ENCODE measurements at regions of chr2 and their contacts with region 1.

Region 1: GRCh38 chr2:25301453-25302352 is 40.0 kb downstream of the DNMT3A start:
- DNase-seq: peak; percentile 95
- ATAC-seq: peak; percentile 95
- H3K4me3 ChIP-seq: peak overlapping the region; percentile 43
- H3K27ac ChIP-seq: peak overlapping the region; percentile 54
- H3K4me1 ChIP-seq: peaks cover 36% of the 10 kb centered on the region
- H3K27me3 ChIP-seq: no peaks in the 10 kb centered on the region
- CTCF ChIP-seq: no peak
- EP300 ChIP-seq: peak; percentile 89 to 92
- POLR2A ChIP-seq: peak; percentile 46; the same call in 1 of the 2 replicates
- RAD21 ChIP-seq: no peak

Region 2: GRCh38 chr2:24971536-24972314 is 330.0 kb before region 1 on chr2 and contains the start of gene DNAJC27:
- CTCF ChIA-PET with region 1: no interaction called
- POLR2A ChIA-PET with region 1: no interaction called
- RAD21 ChIA-PET with region 1: no interaction called
- SMC1A ChIA-PET with region 1: no interaction called
- in situ Hi-C with region 1: no loop called
- intact Hi-C with region 1: no loop called
- DNase-seq: peak; percentile 93
- ATAC-seq: peak; percentile 97
- H3K4me3 ChIP-seq: peak within 1 kb of the TSS; percentile 78
- H3K27ac ChIP-seq: peak within 1 kb of the TSS; percentile 95
- H3K4me1 ChIP-seq: no peaks in the 10 kb centered on the region
- H3K27me3 ChIP-seq: no peaks in the 10 kb centered on the region
- CTCF ChIP-seq: no peak
- EP300 ChIP-seq: no peak
- POLR2A ChIP-seq: peak; percentile 83
- RAD21 ChIP-seq: no peak
- polyA plus RNA-seq, gene DNAJC27: 0.95 to 1.3 TPM

Region 3: DNA sequence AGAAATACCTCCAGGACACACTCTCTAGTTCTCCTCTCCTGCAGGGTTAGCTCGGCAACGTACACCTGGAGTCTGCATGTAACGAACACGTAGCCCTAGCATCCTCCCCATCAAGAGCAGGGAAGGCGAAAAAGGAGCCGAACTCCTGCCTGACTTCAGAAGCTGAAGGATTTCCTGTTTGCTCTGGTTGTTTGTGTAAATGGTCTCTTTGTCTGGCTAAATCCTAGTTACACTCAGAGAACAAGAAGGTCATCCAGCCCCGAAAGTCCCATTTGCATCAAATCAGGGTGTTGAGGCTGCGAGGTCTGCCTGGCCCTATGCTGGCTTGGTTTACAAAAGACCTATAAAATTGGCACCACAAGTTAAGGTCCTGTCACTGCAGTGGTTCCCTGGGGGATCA is 67.0 kb before region 1 on chr2:
- CTCF ChIA-PET with region 1: no interaction called
- POLR2A ChIA-PET with region 1: no interaction called
- RAD21 ChIA-PET with region 1: no interaction called
- SMC1A ChIA-PET with region 1: no interaction called
- in situ Hi-C with region 1: no loop called
- intact Hi-C with region 1: no loop called
- DNase-seq: no peak
- ATAC-seq: no peak
- H3K4me3 ChIP-seq: no peak overlapping the region
- H3K27ac ChIP-seq: no peak overlapping the region
- H3K4me1 ChIP-seq: no peaks in the 10 kb centered on the region
- H3K27me3 ChIP-seq: no peaks in the 10 kb centered on the region
- CTCF ChIP-seq: no peak
- EP300 ChIP-seq: no peak
- POLR2A ChIP-seq: no peak
- RAD21 ChIP-seq: no peak

Region 4: DNA sequence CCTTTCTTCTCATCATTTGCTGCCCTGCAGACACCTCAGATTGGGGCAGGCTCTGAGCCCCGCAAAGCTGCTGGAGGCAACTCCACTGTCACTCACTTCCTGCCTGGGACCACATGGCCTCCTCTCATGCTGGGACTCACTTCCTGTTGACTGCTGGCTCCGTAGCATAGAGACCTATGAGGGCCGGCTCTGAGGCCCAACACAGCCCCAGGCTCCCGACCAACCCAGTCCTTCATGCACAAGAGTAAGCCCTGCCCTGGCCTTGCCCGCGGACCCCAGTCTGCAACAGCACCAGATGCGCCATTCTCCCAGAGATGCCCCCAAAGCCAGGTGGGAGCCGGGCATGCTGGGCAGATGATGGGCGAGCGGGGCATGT is 15.7 kb before region 1 on chr2:
- CTCF ChIA-PET with region 1: interaction called, 59 read pairs
- POLR2A ChIA-PET with region 1: interaction called, 4 read pairs
- RAD21 ChIA-PET with region 1: interaction called, 41 read pairs
- SMC1A ChIA-PET with region 1: interaction called, 8 read pairs
- in situ Hi-C with region 1: no loop called
- intact Hi-C with region 1: loop called (anchors 2 kb)
- DNase-seq: no peak
- ATAC-seq: peak; percentile 82
- H3K4me3 ChIP-seq: no peak overlapping the region
- H3K27ac ChIP-seq: peak overlapping the region; percentile 72
- H3K4me1 ChIP-seq: peaks cover 30% of the 10 kb centered on the region
- H3K27me3 ChIP-seq: no peaks in the 10 kb centered on the region
- CTCF ChIP-seq: no peak
- EP300 ChIP-seq: no peak
- POLR2A ChIP-seq: peak; percentile 71
- RAD21 ChIP-seq: no peak

Region 5: DNA sequence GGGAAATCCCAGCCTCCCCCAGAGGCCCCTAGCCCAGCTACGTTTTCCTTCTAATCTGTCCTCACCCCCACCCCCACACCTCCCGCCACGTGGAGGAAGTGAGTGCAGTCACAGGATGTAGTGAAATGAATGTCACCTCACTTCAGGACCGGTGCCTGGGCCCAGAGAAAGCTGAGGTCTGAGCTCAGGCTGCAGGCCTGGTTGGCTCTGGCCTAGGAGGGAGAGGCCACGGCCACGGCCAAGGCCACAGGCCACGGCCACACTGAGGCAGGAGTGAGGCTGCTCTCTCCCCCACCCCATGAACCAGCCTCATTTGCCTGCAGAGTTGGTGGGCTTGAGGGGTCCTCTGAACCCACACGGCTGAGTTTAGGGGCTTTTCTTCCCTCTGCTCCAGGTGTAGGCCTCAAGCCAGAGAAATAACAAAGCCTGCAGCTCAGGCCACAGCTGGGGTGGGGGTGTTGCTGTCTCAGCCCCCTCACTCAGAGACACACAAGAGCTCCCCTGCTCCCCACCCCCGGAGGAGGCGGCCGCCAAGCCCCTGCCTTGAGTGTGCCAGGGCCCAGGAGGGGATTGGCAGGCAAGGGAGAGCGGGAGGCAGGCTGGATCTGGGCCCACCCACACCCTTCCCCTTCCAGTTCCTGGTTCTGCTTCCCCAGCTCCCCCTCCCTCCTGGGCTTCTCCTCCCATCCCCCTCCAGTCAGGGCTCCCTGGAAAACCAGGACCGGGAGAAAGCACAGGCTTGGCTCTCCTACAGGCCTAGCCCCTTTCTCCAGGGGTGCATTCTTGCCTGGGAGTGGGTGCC is 13.0 kb after region 1 on chr2:
- CTCF ChIA-PET with region 1: interaction called, 8 read pairs
- POLR2A ChIA-PET with region 1: interaction called, 6 read pairs
- RAD21 ChIA-PET with region 1: interaction called, 12 read pairs
- SMC1A ChIA-PET with region 1: no interaction called
- in situ Hi-C with region 1: no loop called
- intact Hi-C with region 1: no loop called
- DNase-seq: no peak
- ATAC-seq: peak; percentile 95
- H3K4me3 ChIP-seq: no peak overlapping the region
- H3K27ac ChIP-seq: peak overlapping the region; percentile 95
- H3K4me1 ChIP-seq: peaks cover 31% of the 10 kb centered on the region
- H3K27me3 ChIP-seq: no peaks in the 10 kb centered on the region
- CTCF ChIP-seq: no peak
- EP300 ChIP-seq: peak; percentile 20 to 26; a peak in 1 of 4 replicates
- POLR2A ChIP-seq: peak; percentile 90
- RAD21 ChIP-seq: no peak

Region 6: DNA sequence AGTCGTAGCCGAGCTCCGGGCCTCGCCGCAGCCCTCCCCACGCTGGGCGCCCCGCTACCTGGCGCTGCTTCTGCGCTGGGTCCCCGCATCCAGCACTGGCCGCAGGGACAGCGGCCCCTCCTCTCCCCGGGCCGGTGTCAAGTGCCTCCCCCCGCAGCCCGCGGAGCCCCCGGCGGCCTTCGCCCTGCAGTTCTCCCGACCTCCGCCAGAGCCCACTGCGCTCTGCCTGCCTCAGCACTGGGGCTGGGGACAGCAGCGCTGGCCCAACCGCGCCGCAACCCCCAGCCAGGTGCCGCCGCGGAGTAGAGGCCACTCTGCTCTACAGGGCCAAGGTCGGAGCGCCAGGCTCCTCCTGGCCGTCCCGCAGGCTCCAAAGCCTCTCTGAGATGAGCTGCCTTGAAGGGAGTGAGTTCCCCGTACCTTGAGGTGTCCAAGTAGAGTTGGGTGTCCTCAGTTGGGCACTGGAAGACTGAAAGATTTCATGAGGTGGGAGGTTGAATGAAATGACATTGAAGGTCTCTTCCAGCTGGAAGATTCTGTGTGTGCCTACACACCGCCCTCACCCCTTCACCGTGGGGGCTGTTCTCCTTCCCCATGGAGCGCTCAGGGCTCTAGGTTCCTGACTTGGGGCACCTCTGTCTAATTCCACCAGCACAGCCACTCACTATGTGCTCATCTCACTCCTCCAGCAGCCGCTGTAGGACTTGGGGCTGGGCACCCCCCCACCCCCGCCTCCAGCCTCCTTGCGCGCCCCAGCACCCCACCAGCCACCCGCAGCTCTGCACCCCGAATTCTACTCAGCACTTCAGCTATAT is 40.9 kb after region 1 on chr2:
- CTCF ChIA-PET with region 1: no interaction called
- POLR2A ChIA-PET with region 1: no interaction called
- RAD21 ChIA-PET with region 1: interaction called, 6 read pairs
- SMC1A ChIA-PET with region 1: interaction called, 6 read pairs
- in situ Hi-C with region 1: no loop called
- intact Hi-C with region 1: loop called (anchors 5 kb)
- DNase-seq: no peak
- ATAC-seq: peak; percentile 94
- H3K4me3 ChIP-seq: peak overlapping the region; percentile 76; the same call in 1 of the 2 replicates
- H3K27ac ChIP-seq: peak overlapping the region; percentile 52
- H3K4me1 ChIP-seq: peaks cover 12% of the 10 kb centered on the region
- H3K27me3 ChIP-seq: no peaks in the 10 kb centered on the region; a peak in 1 of 4 replicates
- CTCF ChIP-seq: peak; percentile 93 to 99 (median 97)
- EP300 ChIP-seq: no peak
- POLR2A ChIP-seq: peak; percentile 50; the same call in 1 of the 2 replicates
- RAD21 ChIP-seq: peak; percentile 90

Region 7: DNA sequence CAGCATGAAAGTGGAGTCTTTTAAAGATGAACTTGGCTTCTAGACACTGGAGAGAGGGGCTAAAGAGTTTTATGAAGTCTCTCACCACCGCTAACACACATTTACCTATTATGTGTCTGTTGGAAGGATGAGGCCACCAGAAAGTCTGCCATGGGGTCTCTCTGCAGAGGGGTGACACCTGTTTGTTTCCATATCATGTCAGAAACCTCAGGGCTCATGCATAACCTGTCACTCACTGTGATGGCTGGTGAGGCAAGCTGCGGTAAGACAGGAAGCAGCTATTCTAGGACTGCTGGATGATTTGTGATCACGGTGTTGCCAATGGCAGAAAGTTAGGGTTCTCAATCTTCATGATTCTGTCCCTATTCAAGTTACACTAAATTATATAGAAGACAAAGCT is 100.8 kb after region 1 on chr2:
- CTCF ChIA-PET with region 1: interaction called, 3 read pairs
- POLR2A ChIA-PET with region 1: no interaction called
- RAD21 ChIA-PET with region 1: no interaction called
- SMC1A ChIA-PET with region 1: no interaction called
- in situ Hi-C with region 1: no loop called
- intact Hi-C with region 1: loop called (anchors 1 kb)
- DNase-seq: no peak
- ATAC-seq: peak; percentile 57
- H3K4me3 ChIP-seq: peak overlapping the region; percentile 35; the same call in 1 of the 2 replicates
- H3K27ac ChIP-seq: peak overlapping the region; percentile 97
- H3K4me1 ChIP-seq: peaks cover 58% of the 10 kb centered on the region
- H3K27me3 ChIP-seq: no peaks in the 10 kb centered on the region
- CTCF ChIP-seq: no peak
- EP300 ChIP-seq: peak in 1 of 2 experiments; percentile 74; a peak in 2 of 4 replicates
- POLR2A ChIP-seq: peak; percentile 32; the same call in 1 of the 2 replicates
- RAD21 ChIP-seq: no peak